ENCODE measurements at regions of chr11 and their contacts with region 1.

Region 1: GRCh38 chr11:2151500-2152257 is 9.3 kb downstream of the INS start:
- DNase-seq: peak; percentile 90 to 92
- H3K4me3 ChIP-seq: no peak overlapping the region
- H3K4me3 Mint-ChIP-seq: peak overlapping the region; percentile 33
- H3K27ac Mint-ChIP-seq: peak overlapping the region; percentile 65
- H3K4me1 ChIP-seq: no peaks in the 10 kb centered on the region; the same call in 1 of the 2 replicates
- H3K4me1 Mint-ChIP-seq: no peaks in the 10 kb centered on the region
- H3K27me3 ChIP-seq: no peaks in the 10 kb centered on the region
- H3K27me3 Mint-ChIP-seq: no peaks in the 10 kb centered on the region
- CTCF ChIP-seq: peak; percentile 93 to 97

Region 2: DNA sequence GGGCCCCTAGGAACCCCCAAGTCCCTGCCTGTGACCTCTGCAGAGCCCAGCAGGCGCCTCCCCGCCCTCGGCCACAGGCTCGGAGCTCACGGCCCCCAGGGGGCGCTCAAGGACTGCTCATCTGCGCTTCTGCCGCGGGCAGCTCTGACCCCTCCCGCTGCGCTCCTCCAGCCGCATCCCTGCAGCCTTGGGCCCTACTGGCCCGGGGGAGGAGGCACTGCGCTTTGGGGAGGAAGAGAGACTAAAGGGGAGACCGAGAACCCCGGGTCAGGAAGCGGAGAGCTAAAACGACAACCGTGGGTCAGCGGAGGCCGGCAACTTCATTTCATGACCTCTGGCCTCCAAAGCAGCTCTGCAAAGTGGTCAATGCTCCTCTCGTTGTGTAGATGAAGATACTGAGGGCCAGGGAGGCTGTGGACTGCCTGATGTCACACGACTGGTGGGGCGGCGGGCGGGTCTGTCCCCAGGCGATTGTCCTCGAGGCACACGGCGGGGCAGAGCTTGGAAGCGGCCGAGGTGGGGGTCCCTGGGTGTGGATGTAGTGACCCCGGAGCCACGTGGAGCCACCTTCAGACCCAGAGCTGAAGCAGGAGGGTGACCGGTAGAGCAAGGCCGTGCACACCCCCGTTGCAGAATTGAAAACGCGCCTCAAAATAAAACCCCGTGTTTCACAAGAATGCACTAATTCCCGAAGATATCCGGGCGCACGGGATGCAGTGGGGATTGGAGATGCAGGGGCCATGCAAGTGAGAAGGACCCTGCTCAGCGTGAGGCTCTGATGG is 457.4 kb before region 1 on chr11:
- CTCF ChIA-PET with region 1: interaction called, 87 read pairs
- POLR2A ChIA-PET with region 1: no interaction called
- intact Hi-C with region 1: loop called (anchors 1 kb)
- DNase-seq: peak; percentile 86 to 93
- H3K4me3 ChIP-seq: peak overlapping the region; percentile 49
- H3K4me3 Mint-ChIP-seq: peak overlapping the region; percentile 83
- H3K27ac Mint-ChIP-seq: peak overlapping the region; percentile 91
- H3K4me1 ChIP-seq: peaks cover 44% of the 10 kb centered on the region
- H3K4me1 Mint-ChIP-seq: peaks cover 34% of the 10 kb centered on the region
- H3K27me3 ChIP-seq: no peaks in the 10 kb centered on the region
- H3K27me3 Mint-ChIP-seq: no peaks in the 10 kb centered on the region
- CTCF ChIP-seq: peak; percentile 93 to 95

Region 3: GRCh38 chr11:1917671-1918516 is 233.8 kb before region 1 on chr11:
- CTCF ChIA-PET with region 1: interaction called, 16 read pairs
- POLR2A ChIA-PET with region 1: no interaction called
- intact Hi-C with region 1: no loop called
- DNase-seq: no peak
- H3K4me3 ChIP-seq: no peak overlapping the region
- H3K4me3 Mint-ChIP-seq: no peak overlapping the region
- H3K27ac Mint-ChIP-seq: no peak overlapping the region
- H3K4me1 ChIP-seq: no peaks in the 10 kb centered on the region
- H3K4me1 Mint-ChIP-seq: no peaks in the 10 kb centered on the region
- H3K27me3 ChIP-seq: no peaks in the 10 kb centered on the region
- H3K27me3 Mint-ChIP-seq: no peaks in the 10 kb centered on the region
- CTCF ChIP-seq: peak; percentile 49 to 52

Region 4: DNA sequence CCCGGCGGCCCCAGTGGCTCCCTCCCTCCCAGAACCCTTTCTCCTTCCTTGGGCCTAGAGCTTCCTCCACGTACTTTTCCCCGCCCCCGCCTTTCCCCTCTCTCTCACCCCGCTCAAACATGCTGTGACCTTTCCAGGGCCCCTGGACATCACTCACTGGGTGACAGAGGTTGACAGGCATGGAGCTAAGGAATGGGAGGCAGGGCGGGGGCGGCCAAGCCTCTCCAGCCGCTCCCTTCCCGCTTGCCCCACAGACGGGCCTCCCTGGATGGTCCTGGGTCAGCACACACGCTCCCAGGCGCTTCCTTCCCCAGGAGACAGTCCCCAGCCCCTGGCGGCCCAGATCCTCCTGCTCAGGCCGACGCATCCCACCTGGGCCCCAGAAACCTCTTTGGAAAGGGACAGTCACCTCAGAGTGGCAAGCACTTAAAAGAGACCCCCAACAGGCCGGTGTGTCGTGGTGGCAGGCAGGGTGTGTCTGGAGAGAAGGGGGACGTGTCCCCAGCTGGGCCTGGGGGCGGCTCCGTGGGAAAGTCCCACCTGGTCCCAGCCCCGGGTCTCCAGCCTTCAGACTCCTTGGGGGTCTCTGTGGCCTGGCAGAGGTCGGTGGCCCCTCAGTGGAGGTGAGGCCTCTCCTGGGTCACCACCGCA is 162.9 kb before region 1 on chr11:
- CTCF ChIA-PET with region 1: interaction called, 49 read pairs
- POLR2A ChIA-PET with region 1: no interaction called
- intact Hi-C with region 1: no loop called
- DNase-seq: no peak
- H3K4me3 ChIP-seq: no peak overlapping the region
- H3K4me3 Mint-ChIP-seq: no peak overlapping the region
- H3K27ac Mint-ChIP-seq: no peak overlapping the region
- H3K4me1 ChIP-seq: no peaks in the 10 kb centered on the region
- H3K4me1 Mint-ChIP-seq: no peaks in the 10 kb centered on the region
- H3K27me3 ChIP-seq: no peaks in the 10 kb centered on the region
- H3K27me3 Mint-ChIP-seq: no peaks in the 10 kb centered on the region
- CTCF ChIP-seq: no peak

Region 5: DNA sequence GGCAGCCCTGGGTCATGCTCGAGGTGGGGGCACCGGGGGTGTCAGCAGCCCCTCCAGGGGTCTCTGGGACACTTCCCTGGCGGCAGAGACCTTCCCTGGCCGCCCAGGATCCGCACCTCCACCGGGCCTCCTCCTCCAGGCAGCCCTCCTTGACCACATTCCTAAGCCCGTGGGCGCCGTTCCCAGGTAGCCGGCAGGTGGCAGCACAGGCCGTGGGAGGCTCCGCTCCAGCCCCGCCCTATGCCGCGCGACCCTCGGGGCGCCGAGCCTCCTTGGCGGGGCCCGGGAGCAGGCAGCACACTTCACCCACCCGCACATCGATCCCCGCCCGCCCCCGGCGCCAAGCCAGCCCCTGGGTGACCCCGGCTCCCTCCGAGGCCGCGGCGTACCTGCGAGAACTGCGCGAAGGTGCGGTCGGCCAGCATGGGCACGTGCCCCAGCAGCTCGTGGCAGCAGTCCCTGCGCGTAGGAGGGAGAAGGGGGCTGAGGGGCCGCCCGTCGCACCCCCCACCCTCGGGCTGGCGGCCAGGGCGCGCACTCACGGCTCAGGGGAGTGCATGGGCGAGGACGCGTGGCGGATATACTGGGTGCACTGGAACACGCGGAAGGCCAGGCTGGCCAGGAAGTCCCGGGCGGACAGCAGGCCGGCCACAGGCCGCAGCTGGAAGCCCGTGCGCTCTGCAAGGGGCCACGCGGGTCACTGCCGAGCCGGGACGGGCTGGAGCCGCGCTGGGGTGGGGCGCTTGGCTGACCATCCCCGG is 14.6 kb after region 1 on chr11:
- CTCF ChIA-PET with region 1: interaction called, 168 read pairs
- POLR2A ChIA-PET with region 1: no interaction called
- intact Hi-C with region 1: loop called (anchors 1 kb)
- DNase-seq: peak in 1 of 2 experiments; percentile 71
- H3K4me3 ChIP-seq: no peak overlapping the region
- H3K4me3 Mint-ChIP-seq: no peak overlapping the region
- H3K27ac Mint-ChIP-seq: no peak overlapping the region
- H3K4me1 ChIP-seq: peaks cover 12% of the 10 kb centered on the region
- H3K4me1 Mint-ChIP-seq: no peaks in the 10 kb centered on the region
- H3K27me3 ChIP-seq: no peaks in the 10 kb centered on the region
- H3K27me3 Mint-ChIP-seq: no peaks in the 10 kb centered on the region
- CTCF ChIP-seq: peak; percentile 62 to 84

Region 6: DNA sequence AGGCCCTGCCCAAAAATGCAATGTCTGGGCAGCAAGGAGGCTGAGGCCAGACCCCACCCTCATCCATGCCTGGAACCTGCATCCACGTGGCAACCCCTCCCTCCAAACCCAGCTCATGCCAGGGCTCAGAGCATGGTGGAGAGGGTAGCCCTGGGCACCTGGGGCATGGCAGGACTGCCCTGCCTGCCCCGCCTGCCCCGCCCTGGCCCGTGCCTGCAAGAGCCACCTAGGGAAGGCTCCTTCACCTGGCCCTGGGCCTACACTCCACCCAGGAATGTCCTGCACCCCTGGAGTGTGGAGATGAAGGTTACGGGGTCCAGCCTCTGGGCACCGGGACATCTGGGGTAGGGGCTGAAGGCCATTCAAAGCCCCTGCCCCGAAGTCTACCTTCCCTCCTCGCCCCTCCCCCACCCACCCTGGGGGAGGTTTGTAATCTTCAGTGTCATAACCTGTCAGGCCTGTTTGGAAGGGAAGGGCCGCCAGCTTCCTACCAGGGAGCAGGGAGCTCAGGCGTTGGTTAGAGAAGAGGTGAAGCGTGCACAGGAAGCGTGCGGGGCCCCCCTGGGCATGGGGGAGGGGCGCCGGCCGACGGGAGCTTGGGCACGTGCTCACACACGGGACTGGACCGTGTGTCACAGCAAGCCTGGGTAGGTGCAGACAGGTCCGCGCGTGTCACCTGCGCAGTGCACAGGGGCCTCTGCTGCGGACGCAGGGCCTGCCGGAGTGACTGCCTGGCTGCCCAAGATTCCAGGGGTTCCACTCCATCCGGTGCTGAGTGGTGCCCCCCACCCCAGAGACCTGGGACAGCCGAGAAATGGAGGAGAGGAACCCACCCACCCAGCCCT is 50.6 kb after region 1 on chr11:
- CTCF ChIA-PET with region 1: interaction called, 68 read pairs
- POLR2A ChIA-PET with region 1: interaction called, 5 read pairs
- intact Hi-C with region 1: loop called (anchors 1 kb)
- DNase-seq: peak; percentile 100
- H3K4me3 ChIP-seq: peak overlapping the region; percentile 32
- H3K4me3 Mint-ChIP-seq: peak overlapping the region; percentile 74
- H3K27ac Mint-ChIP-seq: peak overlapping the region; percentile 73
- H3K4me1 ChIP-seq: peaks cover 69% of the 10 kb centered on the region
- H3K4me1 Mint-ChIP-seq: peaks cover 49% of the 10 kb centered on the region
- H3K27me3 ChIP-seq: no peaks in the 10 kb centered on the region
- H3K27me3 Mint-ChIP-seq: no peaks in the 10 kb centered on the region
- CTCF ChIP-seq: no peak